IMR-90 (cell line): ENCODE measurements at regions of chr7 and their contacts with region 1.

Region 1: DNA sequence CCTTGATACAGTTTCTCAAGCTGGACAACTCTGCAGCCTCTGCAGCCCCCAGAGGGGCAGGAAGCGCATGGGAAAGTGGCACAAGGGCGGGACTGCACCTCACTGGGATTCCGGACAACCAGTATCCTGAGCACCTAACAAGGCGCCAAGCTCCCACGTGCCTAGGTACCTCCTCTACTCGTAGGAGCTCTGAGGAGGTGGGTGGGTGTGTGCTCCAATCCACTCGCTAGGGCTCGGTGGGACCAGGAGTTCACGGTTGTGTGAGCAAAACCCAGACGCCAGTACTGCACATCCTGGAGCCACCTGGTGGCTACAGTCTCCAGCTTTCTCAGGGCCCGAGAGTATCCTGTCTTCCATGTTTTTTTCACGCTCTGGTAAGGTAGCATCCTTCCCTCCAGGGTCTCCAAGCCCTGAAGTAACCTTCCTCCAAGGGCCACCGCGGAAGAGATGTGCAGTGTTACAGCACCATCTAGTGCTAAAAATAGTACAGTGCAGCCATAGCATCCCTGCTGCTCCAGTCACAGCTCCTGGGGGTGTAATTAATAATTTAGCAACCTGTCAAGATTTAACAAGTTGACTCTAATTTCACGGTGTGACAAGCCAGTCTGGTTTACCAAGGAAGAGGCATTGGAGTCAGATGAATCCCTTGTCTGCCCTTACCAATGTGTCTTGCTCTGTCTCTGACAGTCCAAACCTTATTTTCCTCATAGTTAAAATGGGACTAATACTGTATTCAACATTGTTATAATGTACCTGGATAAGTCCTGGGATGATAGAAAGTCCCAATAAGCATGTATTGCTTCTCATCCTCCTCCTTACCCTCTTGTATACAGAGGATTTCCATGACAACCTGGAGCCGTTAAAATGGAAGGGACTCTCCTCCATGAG is 70.4 kb downstream of the HERPUD2 start:
- DNase-seq: peak; percentile 29
- ATAC-seq: peak; percentile 97
- H3K4me3 ChIP-seq: no peak overlapping the region
- H3K27ac ChIP-seq: no peak overlapping the region
- H3K4me1 ChIP-seq: no peaks in the 10 kb centered on the region; the same call in 1 of the 2 replicates
- H3K27me3 ChIP-seq: no peaks in the 10 kb centered on the region
- CTCF ChIP-seq: peak; percentile 79
- POLR2A ChIP-seq: no peak
- RAD21 ChIP-seq: peak; percentile 82

Region 2: GRCh38 chr7:35424869-35425495 is 199.6 kb before region 1 on chr7:
- CTCF ChIA-PET with region 1: interaction called, 19 read pairs
- POLR2A ChIA-PET with region 1: no interaction called
- dilution Hi-C with region 1: no loop called
- in situ Hi-C with region 1: loop called (anchors 5 kb)
- intact Hi-C with region 1: loop called (anchors 1 kb)
- DNase-seq: peak; percentile 43
- ATAC-seq: peak; percentile 89
- H3K4me3 ChIP-seq: no peak overlapping the region
- H3K27ac ChIP-seq: no peak overlapping the region
- H3K4me1 ChIP-seq: no peaks in the 10 kb centered on the region
- H3K27me3 ChIP-seq: no peaks in the 10 kb centered on the region
- CTCF ChIP-seq: peak; percentile 75
- POLR2A ChIP-seq: no peak
- RAD21 ChIP-seq: peak; percentile 57

Region 3: DNA sequence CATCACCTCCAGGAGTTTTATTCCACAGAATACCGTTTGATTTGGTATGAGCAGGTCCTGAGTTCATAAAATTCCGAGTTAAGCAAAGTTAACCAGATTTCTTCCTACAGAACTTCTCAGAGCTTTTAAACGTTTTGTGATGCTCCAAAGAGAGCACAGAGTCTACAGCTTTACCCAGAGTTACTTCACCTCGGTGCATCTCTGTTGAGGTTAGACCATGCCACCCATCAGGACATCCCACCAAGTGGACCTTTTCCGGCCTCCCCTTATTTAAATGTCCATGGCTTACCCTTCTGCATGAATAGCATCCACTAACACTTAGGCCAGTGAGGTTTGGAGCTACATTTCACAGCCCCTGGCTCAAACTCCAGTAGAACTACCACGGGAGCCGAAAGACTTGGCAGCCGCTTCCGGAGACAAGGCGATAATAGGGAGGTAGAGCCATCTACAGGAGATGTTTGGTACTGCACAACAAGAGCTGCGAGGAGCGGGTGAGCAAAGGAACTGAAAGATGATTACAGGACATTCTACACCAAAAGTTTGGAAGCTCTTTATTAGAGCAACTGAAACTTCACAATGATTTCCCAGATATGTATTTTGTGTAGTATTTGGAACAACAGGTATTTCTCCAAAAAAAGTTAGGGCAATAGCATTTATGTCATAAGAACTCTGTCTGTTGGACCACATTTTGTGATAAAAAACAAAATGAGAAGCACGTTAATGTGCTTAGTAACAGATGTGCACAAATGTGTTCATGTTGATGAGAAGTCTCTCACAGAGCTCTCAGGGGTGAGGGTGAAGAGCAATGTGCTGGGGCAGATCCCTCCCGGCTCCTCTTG is 104.4 kb before region 1 on chr7:
- CTCF ChIA-PET with region 1: no interaction called
- POLR2A ChIA-PET with region 1: no interaction called
- dilution Hi-C with region 1: no loop called
- in situ Hi-C with region 1: no loop called
- intact Hi-C with region 1: loop called (anchors 5 kb)
- DNase-seq: peak; percentile 52
- ATAC-seq: peak; percentile 84
- H3K4me3 ChIP-seq: no peak overlapping the region
- H3K27ac ChIP-seq: no peak overlapping the region
- H3K4me1 ChIP-seq: no peaks in the 10 kb centered on the region
- H3K27me3 ChIP-seq: peaks cover 2% of the 10 kb centered on the region
- CTCF ChIP-seq: peak; percentile 70
- POLR2A ChIP-seq: no peak
- RAD21 ChIP-seq: peak; percentile 63